ENCODE measurements at regions of chr9 and their contacts with region 1.

Region 1: DNA sequence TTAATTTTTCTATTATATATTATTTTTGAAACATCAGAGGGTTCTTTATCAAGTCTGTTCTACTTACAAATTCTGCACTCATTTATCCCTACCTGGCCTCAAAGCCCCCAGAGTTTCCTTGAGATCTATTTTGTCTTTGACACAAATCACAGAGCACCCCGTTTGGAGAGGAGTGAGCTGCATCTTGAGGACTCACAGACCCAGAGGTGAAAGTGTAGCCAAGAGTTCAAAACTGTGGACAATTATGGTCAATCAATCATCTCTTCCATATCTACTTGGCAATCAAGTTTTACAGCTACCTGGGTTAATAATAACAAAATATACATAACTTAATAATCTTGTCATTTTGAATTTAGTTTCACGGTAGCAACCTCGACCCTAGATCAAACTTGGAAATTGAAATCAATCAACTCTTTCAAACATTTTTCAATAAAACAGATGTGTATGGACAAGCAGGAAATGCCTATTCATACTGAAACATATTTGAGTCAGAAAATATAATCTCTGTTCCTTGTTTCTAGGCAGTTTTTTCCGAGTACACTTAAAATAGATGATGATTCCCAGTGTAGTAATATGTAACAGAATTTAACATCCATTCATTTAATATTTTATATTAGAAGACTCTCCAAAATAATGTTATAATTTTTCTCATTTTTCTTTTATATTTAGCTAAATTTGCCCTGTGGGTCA is 13.7 kb upstream of the SYK start:
- DNase-seq: no peak
- ATAC-seq: peak; percentile 80
- H3K4me3 ChIP-seq: no peak overlapping the region
- H3K27ac ChIP-seq: no peak overlapping the region
- H3K4me1 ChIP-seq: peaks cover 17% of the 10 kb centered on the region
- H3K27me3 ChIP-seq: no peaks in the 10 kb centered on the region
- CTCF ChIP-seq: no peak
- EP300 ChIP-seq: 0 out of 4 replicates have a peak, but pooled peaks of 1 of the 2 experiments have one; percentile 15
- POLR2A ChIP-seq: no peak
- RAD21 ChIP-seq: no peak

Region 2: GRCh38 chr9:90870621-90871326 is 82.9 kb after region 1 on chr9:
- CTCF ChIA-PET with region 1: interaction called, 10 read pairs
- POLR2A ChIA-PET with region 1: no interaction called
- RAD21 ChIA-PET with region 1: no interaction called
- SMC1A ChIA-PET with region 1: no interaction called
- in situ Hi-C with region 1: no loop called
- intact Hi-C with region 1: no loop called
- DNase-seq: peak; percentile 17
- ATAC-seq: peak; percentile 81
- H3K4me3 ChIP-seq: no peak overlapping the region
- H3K27ac ChIP-seq: no peak overlapping the region
- H3K4me1 ChIP-seq: no peaks in the 10 kb centered on the region
- H3K27me3 ChIP-seq: no peaks in the 10 kb centered on the region
- CTCF ChIP-seq: peak; percentile 84 to 89 (median 85)
- EP300 ChIP-seq: no peak
- POLR2A ChIP-seq: no peak
- RAD21 ChIP-seq: peak; percentile 95

Region 3: GRCh38 chr9:90999425-91000397 is 211.8 kb after region 1 on chr9:
- CTCF ChIA-PET with region 1: no interaction called
- POLR2A ChIA-PET with region 1: no interaction called
- RAD21 ChIA-PET with region 1: no interaction called
- SMC1A ChIA-PET with region 1: no interaction called
- in situ Hi-C with region 1: no loop called
- intact Hi-C with region 1: no loop called
- DNase-seq: no peak
- ATAC-seq: no peak
- H3K4me3 ChIP-seq: no peak overlapping the region
- H3K27ac ChIP-seq: no peak overlapping the region
- H3K4me1 ChIP-seq: no peaks in the 10 kb centered on the region
- H3K27me3 ChIP-seq: peaks cover 0 to 3% of the 10 kb centered on the region in 2 experiments; a peak in 1 of 4 replicates
- CTCF ChIP-seq: no peak
- EP300 ChIP-seq: no peak
- POLR2A ChIP-seq: no peak
- RAD21 ChIP-seq: no peak

Measured in GM12878 (cell line).